Activated B cell treated with CpG ODN at 0.5 μM for 24 hours (primary cell): ENCODE measurements at regions of chr19 and their contacts with region 1.

Region 1: GRCh38 chr19:13846557-13847406 is 30.2 kb upstream of the NANOS3 start:
- DNase-seq: peak; percentile 92
- ATAC-seq: peak; percentile 56
- H3K4me3 Mint-ChIP-seq: peak overlapping the region; percentile 88
- H3K27ac Mint-ChIP-seq: peak overlapping the region; percentile 98
- H3K4me1 Mint-ChIP-seq: peaks cover 62% of the 10 kb centered on the region
- H3K27me3 Mint-ChIP-seq: peaks cover 3% of the 10 kb centered on the region
- CTCF ChIP-seq: no peak

Region 2: DNA sequence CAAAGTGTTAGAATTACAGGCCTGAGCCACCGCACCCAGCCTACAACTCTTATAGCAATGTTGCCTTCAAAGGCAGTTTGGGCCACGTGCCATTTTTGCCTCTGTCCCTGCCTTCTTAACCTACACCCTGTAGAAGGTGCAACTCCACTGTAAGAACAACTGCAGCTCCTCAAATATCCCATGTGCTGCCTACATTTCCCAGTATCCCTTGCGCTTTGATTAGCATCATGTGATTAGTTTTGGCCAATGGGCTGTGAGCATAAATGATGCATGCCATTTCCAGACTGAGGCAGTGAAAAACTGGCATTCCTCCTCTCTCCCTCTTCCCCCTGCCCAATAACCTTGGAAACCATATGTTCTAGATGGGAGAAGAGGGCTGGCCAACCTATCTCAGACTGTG is 157.7 kb before region 1 on chr19:
- CTCF ChIA-PET with region 1: no interaction called
- POLR2A ChIA-PET with region 1: no interaction called
- intact Hi-C with region 1: no loop called
- DNase-seq: no peak
- ATAC-seq: peak; percentile 25
- H3K4me3 Mint-ChIP-seq: no peak overlapping the region
- H3K27ac Mint-ChIP-seq: no peak overlapping the region
- H3K4me1 Mint-ChIP-seq: no peaks in the 10 kb centered on the region
- H3K27me3 Mint-ChIP-seq: peaks cover 18% of the 10 kb centered on the region
- CTCF ChIP-seq: no peak

Region 3: DNA sequence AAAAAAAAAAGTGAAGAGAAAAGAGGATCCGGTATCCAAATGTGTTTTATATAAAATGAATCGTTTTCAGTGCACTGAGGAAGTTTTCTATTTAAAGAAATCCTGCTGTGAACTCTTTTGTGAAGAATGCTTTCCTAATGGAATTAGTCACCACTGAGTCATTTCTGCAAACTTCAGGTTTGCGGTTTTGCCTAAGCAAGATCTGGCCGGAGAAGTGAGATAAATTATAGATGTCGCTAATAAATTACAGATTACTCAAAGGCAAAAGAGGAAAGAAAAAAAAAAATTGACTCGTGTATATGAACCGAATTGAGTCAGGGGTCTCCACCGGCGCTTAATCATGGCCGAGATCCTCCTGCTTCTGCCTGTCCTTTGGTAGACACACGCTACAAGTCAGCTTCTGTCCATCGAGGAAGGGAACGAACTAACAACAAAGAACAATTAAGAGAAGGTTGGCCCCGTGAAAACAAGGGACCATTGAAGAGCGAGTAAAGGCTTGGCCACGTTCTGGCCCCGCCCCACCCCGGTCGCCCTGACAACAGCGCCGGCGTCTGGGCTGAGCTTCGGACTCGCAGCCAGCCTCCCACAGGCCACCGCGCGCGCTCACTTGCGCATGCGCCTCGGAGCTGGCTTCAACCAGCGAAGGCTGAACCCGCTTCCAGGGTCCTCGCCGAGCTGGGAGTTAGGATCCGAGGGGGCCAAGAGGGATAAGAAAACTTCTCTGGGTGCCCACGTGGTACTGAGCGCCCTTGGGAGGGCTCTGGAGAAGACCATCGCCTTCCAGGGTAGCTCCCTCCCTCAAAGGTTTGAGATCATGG is 115.4 kb before region 1 on chr19:
- CTCF ChIA-PET with region 1: no interaction called
- POLR2A ChIA-PET with region 1: no interaction called
- intact Hi-C with region 1: loop called (anchors 5 kb)
- DNase-seq: peak; percentile 96
- ATAC-seq: peak; percentile 100
- H3K4me3 Mint-ChIP-seq: peak overlapping the region; percentile 90
- H3K27ac Mint-ChIP-seq: peak overlapping the region; percentile 93
- H3K4me1 Mint-ChIP-seq: peaks cover 21% of the 10 kb centered on the region
- H3K27me3 Mint-ChIP-seq: no peaks in the 10 kb centered on the region
- CTCF ChIP-seq: no peak

Region 4: GRCh38 chr19:13748169-13748828 is 98.5 kb before region 1 on chr19:
- CTCF ChIA-PET with region 1: no interaction called
- POLR2A ChIA-PET with region 1: interaction called, 18 read pairs
- intact Hi-C with region 1: no loop called
- DNase-seq: no peak
- ATAC-seq: no peak
- H3K4me3 Mint-ChIP-seq: peak overlapping the region; percentile 87
- H3K27ac Mint-ChIP-seq: peak overlapping the region; percentile 85
- H3K4me1 Mint-ChIP-seq: peaks cover 27% of the 10 kb centered on the region
- H3K27me3 Mint-ChIP-seq: no peaks in the 10 kb centered on the region
- CTCF ChIP-seq: no peak

Region 5: GRCh38 chr19:13774217-13775191 is 72.3 kb before region 1 on chr19 and contains the start of gene C19orf53:
- CTCF ChIA-PET with region 1: no interaction called
- POLR2A ChIA-PET with region 1: interaction called, 10 read pairs
- intact Hi-C with region 1: no loop called
- DNase-seq: peak; percentile 86
- ATAC-seq: peak; percentile 99
- H3K4me3 Mint-ChIP-seq: peak within 1 kb of the TSS; percentile 100
- H3K27ac Mint-ChIP-seq: peak within 1 kb of the TSS; percentile 95
- H3K4me1 Mint-ChIP-seq: peaks cover 26% of the 10 kb centered on the region
- H3K27me3 Mint-ChIP-seq: no peaks in the 10 kb centered on the region
- CTCF ChIP-seq: no peak
- total RNA-seq, gene C19orf53: 74.9 and 76.1 TPM in 2 replicates

Region 6: DNA sequence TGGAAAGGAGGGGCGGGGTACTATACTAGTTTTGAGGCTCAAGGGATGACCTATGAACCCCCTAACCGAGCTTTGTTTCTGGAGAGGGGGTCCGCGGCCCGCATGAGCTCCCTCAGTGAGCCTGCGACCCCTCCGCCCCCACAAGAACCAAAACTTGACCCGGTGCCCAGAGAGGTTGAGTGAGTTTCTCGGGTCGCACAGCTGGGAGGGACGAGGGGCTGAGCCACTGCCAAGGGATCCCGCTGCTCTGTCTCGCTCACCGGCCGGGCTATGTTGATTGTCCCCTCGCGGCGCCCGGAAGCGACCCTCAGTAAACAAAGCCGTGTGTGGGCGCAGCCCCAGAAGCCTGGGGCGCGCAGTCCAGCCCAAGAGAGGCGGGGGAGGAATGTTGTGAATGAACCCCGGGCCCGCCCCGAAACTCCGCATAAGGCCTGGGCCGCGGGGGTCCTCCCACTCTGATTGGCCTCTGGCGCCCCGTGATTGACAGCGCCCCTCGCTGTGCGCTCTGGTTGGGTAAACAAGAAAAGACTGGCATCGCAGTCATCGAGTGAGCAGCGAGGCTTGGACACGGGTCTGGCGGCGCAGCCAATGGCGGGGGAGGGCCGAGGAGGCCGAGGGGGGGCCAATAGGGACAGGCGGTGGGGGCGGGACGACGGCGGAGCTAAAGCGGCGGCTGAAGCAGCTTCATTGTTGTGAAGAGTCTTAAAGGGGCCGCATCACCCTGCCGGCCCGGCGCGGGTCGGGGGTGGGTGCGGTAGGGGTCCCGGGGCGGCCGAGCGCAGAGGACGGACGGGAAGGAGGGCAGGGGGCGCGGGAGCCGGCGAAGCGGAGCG is 51.8 kb before region 1 on chr19 and contains the start of gene ZSWIM4:
- CTCF ChIA-PET with region 1: interaction called, 4 read pairs
- POLR2A ChIA-PET with region 1: interaction called, 25 read pairs
- intact Hi-C with region 1: loop called (anchors 1 kb)
- DNase-seq: peak; percentile 86
- ATAC-seq: peak; percentile 95
- H3K4me3 Mint-ChIP-seq: peak within 1 kb of the TSS; percentile 98
- H3K27ac Mint-ChIP-seq: peak within 1 kb of the TSS; percentile 91
- H3K4me1 Mint-ChIP-seq: peaks cover 32% of the 10 kb centered on the region
- H3K27me3 Mint-ChIP-seq: no peaks in the 10 kb centered on the region
- CTCF ChIP-seq: no peak
- total RNA-seq, gene ZSWIM4: 8.5 and 11.2 TPM in 2 replicates

Region 7: DNA sequence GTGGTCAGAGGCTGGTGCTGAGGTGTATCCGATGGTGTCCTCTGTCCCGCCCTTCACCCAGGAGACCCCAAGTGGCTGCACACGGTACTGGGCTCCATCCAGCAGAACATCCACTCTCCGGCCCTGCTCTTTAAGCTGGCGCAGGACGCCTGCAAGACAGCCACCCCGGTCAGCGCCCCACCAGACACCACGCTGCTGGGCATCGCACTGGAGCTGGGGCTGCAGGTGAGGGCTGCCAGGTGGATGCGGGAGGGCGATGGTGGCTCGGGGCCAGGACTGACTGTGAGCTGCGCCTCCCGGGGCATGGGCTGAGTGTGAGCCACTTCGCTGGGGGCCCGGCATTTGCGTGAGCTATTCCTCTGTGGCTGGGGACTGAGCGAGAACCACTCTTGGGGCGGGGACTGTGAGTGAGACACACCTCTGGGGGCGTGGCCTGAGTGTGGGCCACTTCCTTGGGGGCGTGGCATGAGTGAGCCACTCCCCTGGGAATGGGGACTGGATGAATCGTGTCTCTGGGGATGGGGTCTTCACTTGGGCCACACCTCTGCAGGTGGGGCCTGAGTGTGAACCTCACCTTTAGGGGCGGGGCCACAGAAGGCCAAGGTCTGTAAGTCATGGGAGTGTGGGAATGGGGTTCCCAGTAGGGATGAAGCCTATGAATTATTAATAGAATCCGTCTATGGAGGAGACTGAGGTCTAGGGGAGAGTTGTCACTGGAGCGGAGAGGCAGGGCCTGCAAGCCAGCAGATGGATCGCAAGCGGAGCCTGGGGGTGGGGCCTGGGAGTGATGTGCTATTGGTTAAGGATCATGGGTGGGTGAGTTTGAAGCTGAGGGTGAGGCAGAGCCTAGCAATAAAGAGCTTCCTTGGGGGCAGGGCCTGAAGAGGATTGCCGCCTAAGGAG is 21.0 kb before region 1 on chr19:
- CTCF ChIA-PET with region 1: no interaction called
- POLR2A ChIA-PET with region 1: interaction called, 12 read pairs
- intact Hi-C with region 1: no loop called
- DNase-seq: no peak
- ATAC-seq: peak; percentile 42
- H3K4me3 Mint-ChIP-seq: no peak overlapping the region
- H3K27ac Mint-ChIP-seq: no peak overlapping the region
- H3K4me1 Mint-ChIP-seq: peaks cover 2% of the 10 kb centered on the region
- H3K27me3 Mint-ChIP-seq: no peaks in the 10 kb centered on the region
- CTCF ChIP-seq: no peak

Region 8: GRCh38 chr19:13833330-13834243 is 13.2 kb before region 1 on chr19:
- CTCF ChIA-PET with region 1: interaction called, 4 read pairs
- POLR2A ChIA-PET with region 1: interaction called, 73 read pairs
- intact Hi-C with region 1: loop called (anchors 2 kb)
- DNase-seq: peak; percentile 92
- ATAC-seq: peak; percentile 86
- H3K4me3 Mint-ChIP-seq: peak overlapping the region; percentile 90
- H3K27ac Mint-ChIP-seq: peak overlapping the region; percentile 86
- H3K4me1 Mint-ChIP-seq: peaks cover 45% of the 10 kb centered on the region
- H3K27me3 Mint-ChIP-seq: no peaks in the 10 kb centered on the region
- CTCF ChIP-seq: no peak